T-cell (primary cell): ENCODE measurements at regions of chr11 and their contacts with region 1.

Region 1: GRCh38 chr11:66677599-66678375 is at the start of gene RBM4B:
- DNase-seq: peak; percentile 91 to 98 (median 94)
- ATAC-seq: peak; percentile 88 to 91 (median 89)
- H3K4me3 ChIP-seq: peak within 1 kb of the TSS; percentile 89 to 94
- H3K4me3 Mint-ChIP-seq: peak within 1 kb of the TSS; percentile 90 to 96 (median 94)
- H3K27ac ChIP-seq: peak within 1 kb of the TSS; percentile 97
- H3K27ac Mint-ChIP-seq: peak within 1 kb of the TSS; percentile 98
- H3K4me1 ChIP-seq: peaks cover 21 to 32% of the 10 kb centered on the region in 2 experiments
- H3K4me1 Mint-ChIP-seq: peaks cover 43 to 44% (median 44%) of the 10 kb centered on the region in 3 donors
- H3K27me3 ChIP-seq: no peaks in the 10 kb centered on the region
- H3K27me3 Mint-ChIP-seq: no peaks in the 10 kb centered on the region
- total RNA-seq, gene RBM4B: 9.1 to 26.2 (median 20.2) TPM

Region 2: DNA sequence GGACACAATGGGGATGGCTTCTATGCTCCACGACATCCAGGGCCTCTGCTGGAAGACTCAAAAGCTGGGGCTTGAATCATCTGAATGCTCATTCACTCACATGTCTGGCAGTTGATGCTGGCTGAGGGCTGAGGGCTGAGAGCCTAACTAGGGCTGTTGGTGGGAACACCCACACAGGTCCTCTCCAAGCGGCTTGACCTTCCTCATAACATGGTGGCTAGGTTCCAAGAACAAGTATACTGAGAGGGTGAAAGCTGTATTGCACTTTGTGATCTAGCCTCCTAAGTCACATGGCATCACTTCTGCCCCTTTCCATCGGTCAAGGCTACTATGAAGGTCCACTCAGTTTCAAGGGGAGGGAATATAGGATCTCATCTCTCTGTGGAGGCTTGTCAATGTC is 378.6 kb before region 1 on chr11:
- CTCF ChIA-PET with region 1: no interaction called
- POLR2A ChIA-PET with region 1: no interaction called
- DNase-seq: no peak
- ATAC-seq: no peak
- H3K4me3 ChIP-seq: no peak overlapping the region
- H3K4me3 Mint-ChIP-seq: no peak overlapping the region
- H3K27ac ChIP-seq: no peak overlapping the region
- H3K27ac Mint-ChIP-seq: no peak overlapping the region
- H3K4me1 ChIP-seq: no peaks in the 10 kb centered on the region
- H3K4me1 Mint-ChIP-seq: no peaks in the 10 kb centered on the region
- H3K27me3 ChIP-seq: peaks cover 0 to 20% of the 10 kb centered on the region in 2 experiments
- H3K27me3 Mint-ChIP-seq: peaks cover 0 to 3% of the 10 kb centered on the region in 2 donors

Region 3: GRCh38 chr11:66408488-66409214 is 269.1 kb before region 1 on chr11:
- CTCF ChIA-PET with region 1: interaction called in 1 of 2 experiments, 27 read pairs
- POLR2A ChIA-PET with region 1: no interaction called
- DNase-seq: peak; percentile 74 to 97 (median 88)
- ATAC-seq: peak; percentile 88 to 93 (median 90)
- H3K4me3 ChIP-seq: peak overlapping the region; percentile 21 to 49
- H3K4me3 Mint-ChIP-seq: peak overlapping the region; percentile 69 to 81 (median 79)
- H3K27ac ChIP-seq: no peak overlapping the region
- H3K27ac Mint-ChIP-seq: no peak overlapping the region
- H3K4me1 ChIP-seq: peaks cover 0 to 15% of the 10 kb centered on the region in 2 experiments
- H3K4me1 Mint-ChIP-seq: peaks cover 2 to 6% (median 3%) of the 10 kb centered on the region in 3 donors
- H3K27me3 ChIP-seq: peaks cover 3 to 59% of the 10 kb centered on the region in 2 experiments
- H3K27me3 Mint-ChIP-seq: peaks cover 32 to 35% of the 10 kb centered on the region in 2 donors

Region 4: DNA sequence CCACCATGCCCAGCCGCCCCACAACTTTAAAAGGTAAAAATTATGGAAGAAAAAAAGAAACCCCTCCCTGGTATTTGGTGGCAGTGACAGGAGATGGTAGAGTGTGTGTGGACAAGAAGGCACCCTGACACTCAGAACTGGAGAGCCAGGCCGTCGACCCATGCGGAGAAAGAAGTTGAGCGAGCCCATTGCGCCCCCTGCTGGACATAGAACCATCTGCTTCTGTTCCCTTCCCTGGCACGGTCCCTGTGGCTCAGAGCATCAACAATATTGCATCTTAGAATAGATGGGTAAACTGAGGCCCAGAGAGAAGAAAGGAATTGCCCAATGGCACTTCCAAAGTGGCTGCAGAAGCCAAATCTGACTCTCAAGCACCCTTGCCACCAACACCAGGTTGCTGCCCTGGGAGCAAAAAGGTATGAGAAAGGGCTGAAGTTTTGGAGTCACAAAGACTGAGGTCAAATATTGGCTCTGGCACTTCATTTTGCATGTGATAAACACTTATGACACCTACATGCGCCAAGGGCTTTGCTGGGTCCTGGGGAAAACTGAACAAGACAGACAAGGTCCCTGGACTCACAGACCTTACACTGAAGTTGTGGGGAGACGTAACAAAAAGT is 247.7 kb before region 1 on chr11:
- CTCF ChIA-PET with region 1: no interaction called
- POLR2A ChIA-PET with region 1: no interaction called
- DNase-seq: peak; percentile 14 to 85 (median 59)
- ATAC-seq: peak; percentile 54 to 79 (median 68)
- H3K4me3 ChIP-seq: no peak overlapping the region
- H3K4me3 Mint-ChIP-seq: no peak overlapping the region
- H3K27ac ChIP-seq: no peak overlapping the region
- H3K27ac Mint-ChIP-seq: no peak overlapping the region
- H3K4me1 ChIP-seq: no peaks in the 10 kb centered on the region
- H3K4me1 Mint-ChIP-seq: peaks cover 0 to 2% (median 0%) of the 10 kb centered on the region in 3 donors
- H3K27me3 ChIP-seq: peaks cover 0 to 11% of the 10 kb centered on the region in 2 experiments
- H3K27me3 Mint-ChIP-seq: no peaks in the 10 kb centered on the region

Region 5: GRCh38 chr11:66480117-66480938 is 197.5 kb before region 1 on chr11 and contains the start of gene DPP3:
- CTCF ChIA-PET with region 1: interaction called in 1 of 2 experiments, 12 read pairs
- POLR2A ChIA-PET with region 1: no interaction called
- DNase-seq: peak; percentile 86 to 98 (median 95)
- ATAC-seq: peak; percentile 98 to 99 (median 98)
- H3K4me3 ChIP-seq: peak within 1 kb of the TSS; percentile 72 to 89
- H3K4me3 Mint-ChIP-seq: peak within 1 kb of the TSS; percentile 85 to 91 (median 87)
- H3K27ac ChIP-seq: peak within 1 kb of the TSS; percentile 58
- H3K27ac Mint-ChIP-seq: peak within 1 kb of the TSS; percentile 78 to 92
- H3K4me1 ChIP-seq: peaks cover 3 to 23% of the 10 kb centered on the region in 2 experiments
- H3K4me1 Mint-ChIP-seq: peaks cover 22 to 28% (median 25%) of the 10 kb centered on the region in 3 donors
- H3K27me3 ChIP-seq: no peaks in the 10 kb centered on the region
- H3K27me3 Mint-ChIP-seq: no peaks in the 10 kb centered on the region
- total RNA-seq, gene DPP3: 20.7 to 34.6 (median 29.5) TPM

Region 6: GRCh38 chr11:66579017-66579606 is 98.7 kb before region 1 on chr11:
- CTCF ChIA-PET with region 1: interaction called, 6 to 37 read pairs
- POLR2A ChIA-PET with region 1: interaction called in 1 of 2 experiments, 3 read pairs
- DNase-seq: peak; percentile 31 to 88 (median 65)
- ATAC-seq: peak; percentile 64 to 81 (median 76)
- H3K4me3 ChIP-seq: no peak overlapping the region
- H3K4me3 Mint-ChIP-seq: no peak overlapping the region
- H3K27ac ChIP-seq: no peak overlapping the region
- H3K27ac Mint-ChIP-seq: no peak overlapping the region
- H3K4me1 ChIP-seq: peaks cover 0 to 7% of the 10 kb centered on the region in 2 experiments
- H3K4me1 Mint-ChIP-seq: peaks cover 6 to 15% (median 10%) of the 10 kb centered on the region in 3 donors
- H3K27me3 ChIP-seq: peaks cover 0 to 14% of the 10 kb centered on the region in 2 experiments
- H3K27me3 Mint-ChIP-seq: peaks cover 5 to 16% of the 10 kb centered on the region in 2 donors

Region 7: DNA sequence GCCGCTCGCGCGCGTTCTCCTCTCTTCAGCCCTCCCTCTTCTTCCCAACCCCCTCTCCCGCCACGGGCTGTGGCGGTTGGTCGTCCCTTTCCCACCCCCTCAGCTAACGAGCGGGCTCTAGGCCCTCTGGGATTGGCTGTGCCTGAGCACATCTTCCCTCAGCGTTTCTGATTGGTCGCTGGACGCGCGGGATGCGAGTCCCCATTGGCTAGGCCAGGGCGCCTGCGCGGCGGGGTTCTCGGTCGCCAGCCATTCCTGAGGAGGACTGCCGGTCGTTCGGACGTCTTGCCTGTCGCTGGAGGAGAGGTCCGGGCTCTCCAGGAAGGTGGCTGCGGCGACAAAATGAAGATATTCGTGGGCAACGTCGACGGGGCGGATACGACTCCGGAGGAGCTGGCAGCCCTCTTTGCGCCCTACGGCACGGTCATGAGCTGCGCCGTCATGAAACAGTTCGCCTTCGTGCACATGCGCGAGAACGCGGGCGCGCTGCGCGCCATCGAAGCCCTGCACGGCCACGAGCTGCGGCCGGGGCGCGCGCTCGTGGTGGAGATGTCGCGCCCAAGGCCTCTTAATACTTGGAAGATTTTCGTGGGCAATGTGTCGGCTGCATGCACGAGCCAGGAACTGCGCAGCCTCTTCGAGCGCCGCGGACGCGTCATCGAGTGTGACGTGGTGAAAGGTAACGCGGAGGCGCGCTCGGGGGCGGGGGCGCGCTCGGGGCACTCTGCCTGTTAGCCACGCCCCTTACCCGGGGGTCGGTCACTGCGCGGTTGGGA is 61.2 kb before region 1 on chr11 and contains the start of gene RBM14:
- CTCF ChIA-PET with region 1: interaction called in 1 of 2 experiments, 8 read pairs
- POLR2A ChIA-PET with region 1: interaction called, 4 to 25 read pairs
- DNase-seq: peak; percentile 95 to 99 (median 98)
- ATAC-seq: peak; percentile 85 to 94 (median 93)
- H3K4me3 ChIP-seq: peak within 1 kb of the TSS; percentile 93 to 97
- H3K4me3 Mint-ChIP-seq: peak within 1 kb of the TSS; percentile 97 to 99 (median 98)
- H3K27ac ChIP-seq: peak within 1 kb of the TSS; percentile 97
- H3K27ac Mint-ChIP-seq: peak within 1 kb of the TSS; percentile 98
- H3K4me1 ChIP-seq: peaks cover 29 to 49% of the 10 kb centered on the region in 2 experiments
- H3K4me1 Mint-ChIP-seq: peaks cover 44 to 50% (median 49%) of the 10 kb centered on the region in 3 donors
- H3K27me3 ChIP-seq: no peaks in the 10 kb centered on the region
- H3K27me3 Mint-ChIP-seq: no peaks in the 10 kb centered on the region
- total RNA-seq, gene RBM14: 176 to 382 (median 191) TPM

Region 8: DNA sequence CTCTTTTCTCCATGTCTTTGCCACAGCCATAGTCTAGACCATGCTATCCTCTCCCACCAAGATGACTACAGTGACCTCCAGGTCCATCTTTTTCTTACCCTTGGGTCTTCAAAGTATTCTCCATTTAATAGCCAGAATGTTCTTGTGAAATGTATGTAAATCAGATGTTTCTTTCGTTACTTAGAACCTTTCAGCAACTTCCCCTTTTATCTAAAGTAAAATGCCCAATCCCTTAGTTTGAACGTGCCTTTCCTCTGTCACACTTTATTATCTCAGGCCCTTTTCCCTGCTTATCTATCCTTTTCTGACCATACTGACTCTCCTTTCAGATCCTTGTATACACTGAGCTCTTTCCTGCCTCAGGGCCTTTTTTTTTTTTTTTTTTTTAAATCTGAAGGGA is 18.0 kb before region 1 on chr11:
- CTCF ChIA-PET with region 1: interaction called in 1 of 2 experiments, 6 read pairs
- POLR2A ChIA-PET with region 1: interaction called, 5 to 18 read pairs
- DNase-seq: no peak
- ATAC-seq: no peak
- H3K4me3 ChIP-seq: no peak overlapping the region
- H3K4me3 Mint-ChIP-seq: no peak overlapping the region
- H3K27ac ChIP-seq: no peak overlapping the region
- H3K27ac Mint-ChIP-seq: no peak overlapping the region
- H3K4me1 ChIP-seq: no peaks in the 10 kb centered on the region
- H3K4me1 Mint-ChIP-seq: peaks cover 18 to 30% (median 21%) of the 10 kb centered on the region in 3 donors
- H3K27me3 ChIP-seq: no peaks in the 10 kb centered on the region
- H3K27me3 Mint-ChIP-seq: no peaks in the 10 kb centered on the region

Region 9: DNA sequence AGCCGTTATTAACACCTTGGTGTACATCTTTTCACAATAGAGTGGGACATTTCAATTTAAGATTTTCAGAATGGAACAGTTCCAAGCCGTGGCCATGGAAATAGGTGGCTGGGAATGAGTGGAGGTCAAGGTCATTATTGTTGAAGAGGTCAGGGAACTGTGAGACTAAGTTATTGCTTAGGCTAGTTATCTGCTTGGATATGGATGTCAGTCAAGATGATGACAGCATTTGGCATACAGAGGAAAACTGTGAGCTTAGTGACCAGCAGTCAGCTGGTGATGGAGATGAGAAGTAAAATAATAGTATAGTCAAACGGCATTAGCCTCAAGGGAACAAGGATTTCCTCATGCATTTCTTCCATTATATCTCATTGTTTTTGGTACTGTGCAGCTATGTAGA is 112.9 kb after region 1 on chr11:
- CTCF ChIA-PET with region 1: no interaction called
- POLR2A ChIA-PET with region 1: no interaction called
- DNase-seq: no peak
- ATAC-seq: no peak
- H3K4me3 ChIP-seq: no peak overlapping the region
- H3K4me3 Mint-ChIP-seq: no peak overlapping the region
- H3K27ac ChIP-seq: no peak overlapping the region
- H3K27ac Mint-ChIP-seq: no peak overlapping the region
- H3K4me1 ChIP-seq: no peaks in the 10 kb centered on the region
- H3K4me1 Mint-ChIP-seq: peaks cover 0 to 2% (median 0%) of the 10 kb centered on the region in 3 donors
- H3K27me3 ChIP-seq: no peaks in the 10 kb centered on the region
- H3K27me3 Mint-ChIP-seq: no peaks in the 10 kb centered on the region